ENCODE measurements at regions of chr5 and their contacts with region 1.

Region 1: DNA sequence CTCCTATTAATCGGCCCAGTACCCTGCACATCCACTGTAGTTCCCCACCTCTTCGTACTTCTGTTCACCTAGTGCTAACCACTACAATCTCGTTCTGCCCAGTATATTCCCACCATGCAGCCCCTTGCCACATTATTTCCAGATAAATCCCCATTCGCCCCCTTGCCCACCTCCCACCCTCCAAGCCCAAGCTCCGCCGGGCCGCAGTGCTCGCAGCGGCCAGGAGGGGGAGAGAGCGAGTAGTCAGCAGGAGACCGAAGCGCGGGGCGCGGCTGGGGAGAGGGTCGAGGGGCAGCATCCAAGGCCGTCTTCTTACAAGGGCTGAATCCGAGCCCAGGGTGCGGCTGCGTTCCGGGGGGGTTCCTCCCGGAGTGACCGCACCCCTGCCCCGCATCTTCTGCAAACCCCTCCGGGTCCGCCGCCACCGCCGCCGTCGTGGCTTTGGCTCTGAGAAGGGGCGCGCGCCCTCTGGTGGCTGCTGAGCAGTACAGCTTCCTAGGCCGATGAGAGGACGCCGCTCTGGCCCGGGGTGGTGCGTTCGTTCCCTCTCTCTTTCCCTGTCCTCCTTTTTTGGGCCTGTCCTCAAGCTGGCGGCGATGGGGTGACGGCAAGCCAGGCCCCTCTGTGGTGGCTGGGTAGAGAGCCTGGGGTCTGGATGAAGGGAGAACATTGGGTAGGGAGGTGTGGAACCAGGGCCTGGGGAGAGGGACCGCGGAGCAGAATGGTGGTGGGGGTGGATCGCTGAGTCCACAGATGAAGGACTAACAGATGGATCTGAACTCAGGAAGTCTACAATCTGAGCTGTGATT is 30.0 kb upstream of the PSD2 start:
- DNase-seq: peak; percentile 83
- ATAC-seq: peak; percentile 94
- H3K4me3 Mint-ChIP-seq: peak overlapping the region; percentile 56
- H3K27ac Mint-ChIP-seq: peak overlapping the region; percentile 59
- H3K4me1 Mint-ChIP-seq: peaks cover 12% of the 10 kb centered on the region
- H3K27me3 Mint-ChIP-seq: peaks cover 21% of the 10 kb centered on the region
- CTCF ChIP-seq: peak; percentile 100

Region 2: DNA sequence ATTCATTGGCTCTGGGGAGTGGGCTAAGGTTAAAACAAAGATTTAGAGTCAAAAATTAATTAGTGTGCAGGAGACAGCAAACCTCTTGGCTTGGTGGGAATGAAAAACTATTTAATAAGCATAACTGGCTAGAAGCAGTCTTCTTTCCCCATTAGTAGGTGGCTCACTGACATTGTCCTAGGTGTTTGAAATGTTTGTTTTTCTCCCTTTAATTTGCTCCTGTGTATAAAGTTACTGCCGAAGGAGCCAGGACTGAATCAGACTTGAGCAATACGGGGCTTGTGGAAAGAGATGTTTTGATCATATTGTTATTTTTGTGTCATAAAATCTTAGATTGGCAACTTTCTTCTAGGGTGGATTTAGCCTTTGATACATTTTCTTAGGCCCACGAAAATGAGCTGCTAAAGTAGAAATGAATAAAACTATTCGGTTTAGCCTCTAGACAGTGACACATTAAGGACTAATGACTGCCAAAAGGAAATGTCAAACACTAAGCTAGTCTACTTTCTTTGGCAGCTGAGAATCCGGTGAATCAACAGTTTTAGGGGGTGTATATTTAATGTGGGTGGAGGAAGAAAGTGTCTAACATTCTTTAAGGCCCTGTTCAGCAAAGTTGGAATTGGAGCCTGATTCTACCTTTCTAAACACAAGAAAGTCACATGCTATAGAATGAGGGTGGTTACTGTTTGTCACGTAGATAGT is 920.6 kb before region 1 on chr5:
- CTCF ChIA-PET with region 1: no interaction called
- POLR2A ChIA-PET with region 1: no interaction called
- intact Hi-C with region 1: no loop called
- DNase-seq: no peak
- ATAC-seq: no peak
- H3K4me3 Mint-ChIP-seq: no peak overlapping the region
- H3K27ac Mint-ChIP-seq: no peak overlapping the region
- H3K4me1 Mint-ChIP-seq: peaks cover 6% of the 10 kb centered on the region
- H3K27me3 Mint-ChIP-seq: no peaks in the 10 kb centered on the region
- CTCF ChIP-seq: no peak

Region 3: DNA sequence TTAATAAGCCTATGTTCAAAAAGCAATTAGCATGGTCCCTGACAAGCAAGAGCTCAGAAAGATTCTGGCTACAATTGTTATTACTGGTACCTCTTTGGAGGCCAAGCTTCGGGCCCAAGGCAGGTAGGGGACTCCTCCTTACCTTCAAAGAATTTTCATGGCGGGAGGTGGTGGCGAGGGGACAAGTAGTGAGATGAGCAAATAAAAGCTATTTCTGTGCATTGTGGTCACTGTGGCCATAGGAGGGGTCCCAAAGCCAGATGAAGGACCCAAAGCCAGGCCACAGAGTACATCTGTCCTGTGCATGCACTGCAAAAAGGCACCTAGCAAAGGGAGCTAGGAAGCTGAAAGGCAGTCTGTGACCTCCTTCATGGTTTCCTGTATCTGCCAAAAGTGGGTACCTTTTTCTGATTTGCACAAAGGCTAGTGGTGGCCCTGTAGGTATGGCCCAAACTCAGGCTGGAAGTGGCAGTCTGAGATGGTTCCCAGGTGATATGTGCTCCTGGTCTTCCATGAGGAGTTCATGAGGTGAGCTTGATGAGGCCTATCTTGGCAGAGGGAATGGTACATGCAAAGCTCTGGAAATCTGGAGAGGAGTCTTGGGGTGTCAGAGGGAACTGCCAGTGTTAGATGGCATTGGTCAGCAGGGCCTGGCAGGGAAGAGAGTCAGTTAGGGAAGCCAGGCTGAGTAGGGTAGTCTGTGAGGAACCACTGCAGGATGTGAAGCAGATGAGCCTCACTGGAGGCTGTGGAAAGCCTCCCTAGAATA is 120.8 kb before region 1 on chr5:
- CTCF ChIA-PET with region 1: interaction called, 211 read pairs
- POLR2A ChIA-PET with region 1: no interaction called
- intact Hi-C with region 1: no loop called
- DNase-seq: no peak
- ATAC-seq: no peak
- H3K4me3 Mint-ChIP-seq: no peak overlapping the region
- H3K27ac Mint-ChIP-seq: no peak overlapping the region
- H3K4me1 Mint-ChIP-seq: peaks cover 11% of the 10 kb centered on the region
- H3K27me3 Mint-ChIP-seq: peaks cover 23% of the 10 kb centered on the region
- CTCF ChIP-seq: no peak

Region 4: DNA sequence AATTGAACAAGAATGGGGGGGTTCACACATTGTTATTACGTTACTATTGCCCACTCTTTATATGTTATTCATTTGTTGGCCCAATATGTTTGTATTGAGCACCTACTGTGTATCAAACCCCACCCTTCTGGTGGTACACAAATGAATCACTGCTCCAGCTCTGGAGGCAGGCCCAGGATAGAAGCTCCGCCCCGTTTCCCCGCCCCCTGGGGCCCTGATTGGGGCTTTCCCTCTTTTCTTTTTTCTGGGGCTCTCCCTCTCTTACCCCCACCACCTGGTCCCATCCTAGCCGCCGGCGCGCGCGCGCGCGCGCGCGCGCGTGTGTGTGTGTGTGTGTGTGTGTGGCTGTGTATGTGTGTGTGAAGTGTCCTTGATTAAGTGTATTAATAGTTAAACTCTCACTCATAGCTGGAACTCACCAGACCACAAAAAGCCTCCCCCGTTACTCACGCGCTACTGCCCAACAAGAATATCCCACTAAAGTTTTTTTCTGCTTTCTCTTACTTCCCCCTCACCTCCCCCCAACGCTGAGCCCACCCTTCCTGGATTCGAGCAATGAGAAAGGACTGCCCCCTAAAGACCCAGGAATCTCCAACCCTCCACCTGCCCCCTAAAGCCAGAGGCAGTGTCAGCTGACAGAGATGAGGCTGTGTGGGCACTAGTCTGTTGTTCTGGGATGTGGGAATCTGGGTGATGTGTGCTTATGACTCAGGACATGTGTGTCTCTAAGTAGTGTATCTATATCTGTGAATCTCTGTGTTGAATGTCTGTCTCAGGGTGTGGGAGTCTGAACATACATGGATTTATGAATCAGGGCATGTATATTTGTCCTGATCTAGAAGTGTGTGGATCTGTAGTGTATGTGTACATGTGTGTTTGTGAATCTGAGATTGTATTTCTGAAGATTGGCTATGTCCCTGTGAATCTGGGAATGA is 113.5 kb before region 1 on chr5:
- CTCF ChIA-PET with region 1: interaction called, 28 read pairs
- POLR2A ChIA-PET with region 1: interaction called, 3 read pairs
- intact Hi-C with region 1: no loop called
- DNase-seq: peak; percentile 92
- ATAC-seq: peak; percentile 72
- H3K4me3 Mint-ChIP-seq: peak overlapping the region; percentile 7
- H3K27ac Mint-ChIP-seq: peak overlapping the region; percentile 17
- H3K4me1 Mint-ChIP-seq: peaks cover 48% of the 10 kb centered on the region
- H3K27me3 Mint-ChIP-seq: peaks cover 34% of the 10 kb centered on the region
- CTCF ChIP-seq: no peak

Region 5: DNA sequence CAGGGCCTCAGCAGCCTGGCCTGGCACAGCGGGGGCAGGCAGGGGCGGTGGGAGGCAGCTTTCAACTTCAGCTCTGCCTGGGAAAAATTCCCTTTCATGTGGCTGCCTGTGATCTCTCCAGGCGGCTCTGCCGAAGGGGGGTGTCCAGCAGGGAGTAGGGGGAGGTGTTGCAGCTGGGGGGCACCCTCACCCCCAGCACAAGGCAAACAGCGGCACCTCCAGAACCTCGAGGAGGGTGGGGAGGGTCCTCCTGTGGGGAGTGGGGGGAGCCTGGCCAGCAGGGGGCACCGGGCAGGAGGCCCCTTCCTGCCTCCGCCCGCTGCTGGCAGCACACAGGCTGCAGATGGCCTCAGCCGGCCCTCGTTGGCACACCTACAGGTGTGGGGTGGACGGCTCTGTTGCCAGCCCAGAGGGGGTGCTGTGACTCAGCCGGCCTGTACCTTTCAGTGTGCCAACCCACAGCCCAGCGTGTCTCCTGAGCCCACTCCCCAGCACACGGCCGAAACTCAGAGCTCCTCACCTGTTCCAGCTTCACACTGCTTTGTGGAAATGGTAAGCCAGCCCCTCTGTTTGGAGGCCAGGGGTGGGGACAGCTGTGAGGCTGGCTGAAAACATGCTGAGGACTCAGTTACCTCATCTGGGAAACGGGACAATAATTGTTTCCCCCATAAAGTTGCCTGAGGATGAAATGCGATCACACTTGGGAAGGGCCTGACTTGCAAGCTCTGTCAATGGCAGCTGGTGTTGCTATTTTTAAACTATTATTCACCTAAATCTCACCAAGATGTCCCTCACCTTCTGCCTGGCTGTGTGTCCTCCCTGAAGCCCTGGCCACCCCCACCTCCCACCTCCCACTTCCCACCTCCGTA is 80.5 kb before region 1 on chr5:
- CTCF ChIA-PET with region 1: interaction called, 10 read pairs
- POLR2A ChIA-PET with region 1: no interaction called
- intact Hi-C with region 1: no loop called
- DNase-seq: no peak
- ATAC-seq: no peak
- H3K4me3 Mint-ChIP-seq: no peak overlapping the region
- H3K27ac Mint-ChIP-seq: no peak overlapping the region
- H3K4me1 Mint-ChIP-seq: peaks cover 20% of the 10 kb centered on the region
- H3K27me3 Mint-ChIP-seq: no peaks in the 10 kb centered on the region
- CTCF ChIP-seq: no peak

Region 6: DNA sequence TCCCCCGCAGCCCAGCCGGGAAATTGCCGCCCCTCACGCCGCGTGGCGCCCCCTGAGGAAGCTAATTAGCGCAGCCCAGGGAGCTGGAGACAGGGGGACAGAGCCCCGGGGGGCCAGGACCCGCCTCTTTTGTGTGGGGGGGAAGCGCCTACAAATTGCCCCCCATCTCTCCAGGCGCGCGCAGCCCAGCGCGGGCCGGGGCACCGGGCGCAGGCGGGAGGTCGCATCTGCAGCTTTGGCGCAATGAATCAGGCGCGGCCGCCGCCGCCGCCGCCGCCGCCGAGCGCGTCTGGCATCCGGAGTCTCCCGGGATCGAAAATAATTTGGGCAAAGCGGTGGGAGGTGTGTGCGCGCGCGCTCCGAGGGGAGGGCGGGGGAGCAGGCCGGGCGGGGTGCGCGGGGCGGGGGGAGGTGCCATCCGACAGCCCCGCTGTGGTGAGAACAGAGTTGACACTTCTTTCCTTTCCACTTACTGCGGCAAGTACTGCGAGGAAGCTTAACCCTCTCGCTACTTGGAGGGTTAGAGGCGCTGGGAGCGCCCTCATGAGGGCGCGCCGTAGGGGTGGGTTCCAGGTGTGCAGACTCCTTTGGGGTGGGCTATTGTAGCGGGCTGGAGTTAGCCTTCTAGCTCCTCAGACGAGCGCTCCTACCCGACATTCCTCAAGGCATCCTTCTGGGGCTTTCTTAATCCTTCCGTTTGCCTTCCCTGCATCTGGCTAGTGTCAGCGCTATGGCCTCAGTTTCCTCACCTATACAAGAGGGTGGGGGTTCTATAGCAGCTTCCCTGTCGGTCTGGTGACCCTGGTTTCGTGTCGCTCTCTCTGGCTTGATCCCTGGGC is 54.3 kb before region 1 on chr5:
- CTCF ChIA-PET with region 1: interaction called, 35 read pairs
- POLR2A ChIA-PET with region 1: interaction called, 5 read pairs
- intact Hi-C with region 1: loop called (anchors 2 kb)
- DNase-seq: peak; percentile 79
- ATAC-seq: peak; percentile 78
- H3K4me3 Mint-ChIP-seq: peak overlapping the region; percentile 60
- H3K27ac Mint-ChIP-seq: no peak overlapping the region
- H3K4me1 Mint-ChIP-seq: peaks cover 21% of the 10 kb centered on the region
- H3K27me3 Mint-ChIP-seq: no peaks in the 10 kb centered on the region
- CTCF ChIP-seq: peak; percentile 57

Region 7: GRCh38 chr5:139733698-139734538 is 31.7 kb before region 1 on chr5:
- CTCF ChIA-PET with region 1: interaction called, 11 read pairs
- POLR2A ChIA-PET with region 1: interaction called, 3 read pairs
- intact Hi-C with region 1: no loop called
- DNase-seq: no peak
- ATAC-seq: no peak
- H3K4me3 Mint-ChIP-seq: no peak overlapping the region
- H3K27ac Mint-ChIP-seq: no peak overlapping the region
- H3K4me1 Mint-ChIP-seq: no peaks in the 10 kb centered on the region
- H3K27me3 Mint-ChIP-seq: no peaks in the 10 kb centered on the region
- CTCF ChIP-seq: no peak

Region 8: DNA sequence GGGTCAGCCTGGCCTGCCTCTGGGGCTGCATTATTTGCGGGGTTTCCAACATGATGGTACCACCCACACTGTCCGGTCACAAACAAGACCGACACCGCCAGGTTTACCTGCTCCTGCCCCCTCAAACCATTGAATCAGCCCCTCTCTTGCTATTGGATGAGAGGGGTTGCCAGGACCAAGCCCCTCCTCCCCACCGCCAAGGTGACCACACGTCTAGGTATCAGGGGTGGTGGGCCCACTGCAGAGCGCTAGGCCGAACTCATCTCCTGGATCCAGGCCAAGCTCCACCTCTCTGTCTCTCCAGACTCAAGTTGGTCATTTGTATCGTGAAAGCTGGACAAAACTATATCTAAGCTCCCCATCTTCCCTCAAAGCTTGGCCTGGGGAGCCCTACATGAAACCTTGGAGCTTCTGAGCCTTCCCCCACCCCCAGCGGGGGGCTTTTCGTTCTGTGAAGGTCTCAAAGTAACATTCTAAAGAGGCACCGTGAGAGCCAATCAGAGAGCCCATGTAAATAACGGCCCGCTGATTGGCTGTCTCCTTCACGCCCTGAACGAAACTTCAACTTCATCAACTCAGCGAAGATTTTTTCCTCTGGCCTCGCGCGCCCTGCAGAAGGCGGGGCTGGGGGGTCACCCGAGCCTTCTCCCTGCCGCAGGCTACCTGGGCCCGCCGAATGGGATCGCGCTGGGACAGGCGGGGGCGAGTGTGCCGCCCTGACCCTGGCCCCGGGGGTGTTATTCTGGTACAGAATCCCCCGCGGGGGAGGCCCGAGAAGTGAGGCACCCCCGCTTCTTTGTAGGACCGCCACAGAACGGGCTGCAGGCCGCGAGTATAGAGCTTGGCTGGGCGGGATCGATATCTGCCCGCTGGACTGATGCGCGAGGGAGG is 19.6 kb before region 1 on chr5:
- CTCF ChIA-PET with region 1: interaction called, 86 read pairs
- POLR2A ChIA-PET with region 1: interaction called, 3 read pairs
- intact Hi-C with region 1: no loop called
- DNase-seq: peak; percentile 79
- ATAC-seq: peak; percentile 22
- H3K4me3 Mint-ChIP-seq: peak overlapping the region; percentile 68
- H3K27ac Mint-ChIP-seq: peak overlapping the region; percentile 92
- H3K4me1 Mint-ChIP-seq: peaks cover 36% of the 10 kb centered on the region
- H3K27me3 Mint-ChIP-seq: peaks cover 8% of the 10 kb centered on the region
- CTCF ChIP-seq: no peak

Measured in activated CD8-positive, alpha-beta T cell treated with anti-CD3 and anti-CD28 coated beads for 36 hours (primary cell).